ENCODE measurements at regions of chr2 and their contacts with region 1.

Region 1: GRCh38 chr2:152175458-152176325 is at the start of gene STAM2:
- DNase-seq: peak; percentile 87 to 97 (median 93)
- ATAC-seq: peak; percentile 86
- H3K4me3 ChIP-seq: peak within 1 kb of the TSS; percentile 91 to 92
- H3K4me3 Mint-ChIP-seq: peak within 1 kb of the TSS; percentile 96
- H3K27ac ChIP-seq: peak within 1 kb of the TSS; percentile 81 to 99
- H3K27ac Mint-ChIP-seq: peak within 1 kb of the TSS; percentile 99
- H3K4me1 ChIP-seq: peaks cover 15% of the 10 kb centered on the region
- H3K4me1 Mint-ChIP-seq: peaks cover 35% of the 10 kb centered on the region
- H3K27me3 ChIP-seq: no peaks in the 10 kb centered on the region
- H3K27me3 Mint-ChIP-seq: no peaks in the 10 kb centered on the region
- CTCF ChIP-seq: peak; percentile 96
- total RNA-seq, gene STAM2: 3.2 to 5.7 TPM

Region 2: GRCh38 chr2:151261231-151261976 is 914.3 kb before region 1 on chr2 and contains the start of gene RBM43:
- CTCF ChIA-PET with region 1: no interaction called
- POLR2A ChIA-PET with region 1: no interaction called
- intact Hi-C with region 1: loop called in 1 of 2 experiments (anchors 10 kb)
- DNase-seq: peak; percentile 60 to 94 (median 82)
- ATAC-seq: peak; percentile 87
- H3K4me3 ChIP-seq: peak within 1 kb of the TSS; percentile 68
- H3K4me3 Mint-ChIP-seq: peak within 1 kb of the TSS; percentile 90
- H3K27ac ChIP-seq: peak within 1 kb of the TSS; percentile 91 to 96
- H3K27ac Mint-ChIP-seq: peak within 1 kb of the TSS; percentile 98
- H3K4me1 ChIP-seq: peaks cover 5% of the 10 kb centered on the region
- H3K4me1 Mint-ChIP-seq: peaks cover 38% of the 10 kb centered on the region
- H3K27me3 ChIP-seq: no peaks in the 10 kb centered on the region
- H3K27me3 Mint-ChIP-seq: no peaks in the 10 kb centered on the region
- CTCF ChIP-seq: no peak
- total RNA-seq, gene RBM43: 12.1 to 12.4 TPM

Region 3: GRCh38 chr2:151828143-151828889 is 347.4 kb before region 1 on chr2 and contains the start of gene ARL5A:
- CTCF ChIA-PET with region 1: no interaction called
- POLR2A ChIA-PET with region 1: no interaction called
- intact Hi-C with region 1: loop called (anchors 1 to 5 kb)
- DNase-seq: peak; percentile 91 to 98 (median 94)
- ATAC-seq: peak; percentile 95
- H3K4me3 ChIP-seq: peak within 1 kb of the TSS; percentile 66 to 97
- H3K4me3 Mint-ChIP-seq: peak within 1 kb of the TSS; percentile 85
- H3K27ac ChIP-seq: peak within 1 kb of the TSS; percentile 22 to 80
- H3K27ac Mint-ChIP-seq: peak within 1 kb of the TSS; percentile 93
- H3K4me1 ChIP-seq: peaks cover 34% of the 10 kb centered on the region
- H3K4me1 Mint-ChIP-seq: peaks cover 53% of the 10 kb centered on the region
- H3K27me3 ChIP-seq: no peaks in the 10 kb centered on the region
- H3K27me3 Mint-ChIP-seq: no peaks in the 10 kb centered on the region
- CTCF ChIP-seq: no peak
- total RNA-seq, gene ARL5A: 18.8 to 24.1 TPM

Region 4: DNA sequence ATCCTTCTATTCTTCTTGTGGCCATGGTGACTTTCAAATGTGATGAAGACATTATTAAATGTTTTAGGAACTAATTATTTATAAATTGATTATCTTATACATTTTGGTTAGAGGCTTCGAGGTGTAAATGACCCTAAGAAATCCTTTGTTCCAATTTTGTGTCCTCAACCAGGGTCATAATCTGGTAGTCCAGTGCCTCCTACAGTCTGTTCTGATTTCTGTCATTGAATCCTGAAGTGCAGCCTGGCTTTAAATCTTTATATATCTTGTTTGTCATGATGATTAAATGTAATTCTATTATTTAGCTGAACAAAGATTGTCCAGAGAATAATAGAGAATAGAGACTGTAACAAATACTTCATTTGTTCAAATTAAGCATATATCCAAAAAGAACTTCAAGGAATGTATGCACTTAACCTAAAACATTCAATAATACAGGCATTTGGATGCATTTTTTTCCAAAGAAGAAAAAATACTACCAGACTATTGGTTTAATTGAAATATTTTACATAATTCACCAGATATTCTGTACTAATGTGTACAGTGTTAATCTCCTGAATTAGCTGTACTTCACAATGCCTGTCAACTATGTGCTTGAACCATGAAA is 451.8 kb after region 1 on chr2:
- CTCF ChIA-PET with region 1: interaction called, 7 read pairs
- POLR2A ChIA-PET with region 1: no interaction called
- intact Hi-C with region 1: loop called in 1 of 2 experiments (anchors 2 kb)
- DNase-seq: peak in 2 of 9 experiments; percentile 7 to 21
- ATAC-seq: no peak
- H3K4me3 ChIP-seq: no peak overlapping the region
- H3K4me3 Mint-ChIP-seq: no peak overlapping the region
- H3K27ac ChIP-seq: no peak overlapping the region
- H3K27ac Mint-ChIP-seq: no peak overlapping the region
- H3K4me1 ChIP-seq: no peaks in the 10 kb centered on the region
- H3K4me1 Mint-ChIP-seq: no peaks in the 10 kb centered on the region
- H3K27me3 ChIP-seq: no peaks in the 10 kb centered on the region
- H3K27me3 Mint-ChIP-seq: peaks cover 9% of the 10 kb centered on the region
- CTCF ChIP-seq: no peak

Region 5: GRCh38 chr2:152717228-152718075 is 541.8 kb after region 1 on chr2 and contains the start of gene PRPF40A:
- CTCF ChIA-PET with region 1: interaction called, 3 read pairs
- POLR2A ChIA-PET with region 1: interaction called, 10 read pairs
- intact Hi-C with region 1: loop called (anchors 1 to 5 kb)
- DNase-seq: peak; percentile 97 to 99 (median 99)
- ATAC-seq: peak; percentile 79
- H3K4me3 ChIP-seq: peak within 1 kb of the TSS; percentile 85 to 95
- H3K4me3 Mint-ChIP-seq: peak within 1 kb of the TSS; percentile 100
- H3K27ac ChIP-seq: peak within 1 kb of the TSS; percentile 95 to 99
- H3K27ac Mint-ChIP-seq: peak within 1 kb of the TSS; percentile 100
- H3K4me1 ChIP-seq: peaks cover 22% of the 10 kb centered on the region
- H3K4me1 Mint-ChIP-seq: peaks cover 59% of the 10 kb centered on the region
- H3K27me3 ChIP-seq: no peaks in the 10 kb centered on the region
- H3K27me3 Mint-ChIP-seq: no peaks in the 10 kb centered on the region
- CTCF ChIP-seq: no peak
- total RNA-seq, gene PRPF40A: 164 to 180 TPM

Region 6: GRCh38 chr2:153519257-153519875 is 1343.7 kb after region 1 on chr2:
- CTCF ChIA-PET with region 1: no interaction called
- POLR2A ChIA-PET with region 1: no interaction called
- intact Hi-C with region 1: loop called in 1 of 2 experiments (anchors 5 kb)
- DNase-seq: peak; percentile 13 to 66 (median 50)
- ATAC-seq: no peak
- H3K4me3 ChIP-seq: no peak overlapping the region
- H3K4me3 Mint-ChIP-seq: no peak overlapping the region
- H3K27ac ChIP-seq: no peak overlapping the region
- H3K27ac Mint-ChIP-seq: no peak overlapping the region
- H3K4me1 ChIP-seq: no peaks in the 10 kb centered on the region
- H3K4me1 Mint-ChIP-seq: no peaks in the 10 kb centered on the region
- H3K27me3 ChIP-seq: no peaks in the 10 kb centered on the region
- H3K27me3 Mint-ChIP-seq: no peaks in the 10 kb centered on the region
- CTCF ChIP-seq: peak; percentile 88